ENCODE measurements at regions of chr3 and their contacts with region 1.

Region 1: GRCh38 chr3:39519554-39520288 is 52.2 kb downstream of the MOBP start:
- DNase-seq: no peak
- H3K4me3 ChIP-seq: no peak overlapping the region
- H3K27ac ChIP-seq: no peak overlapping the region
- H3K4me1 ChIP-seq: peaks cover 3% of the 10 kb centered on the region
- H3K27me3 ChIP-seq: no peaks in the 10 kb centered on the region
- CTCF ChIP-seq: no peak
- EP300 ChIP-seq: no peak
- POLR2A ChIP-seq: no peak

Region 2: DNA sequence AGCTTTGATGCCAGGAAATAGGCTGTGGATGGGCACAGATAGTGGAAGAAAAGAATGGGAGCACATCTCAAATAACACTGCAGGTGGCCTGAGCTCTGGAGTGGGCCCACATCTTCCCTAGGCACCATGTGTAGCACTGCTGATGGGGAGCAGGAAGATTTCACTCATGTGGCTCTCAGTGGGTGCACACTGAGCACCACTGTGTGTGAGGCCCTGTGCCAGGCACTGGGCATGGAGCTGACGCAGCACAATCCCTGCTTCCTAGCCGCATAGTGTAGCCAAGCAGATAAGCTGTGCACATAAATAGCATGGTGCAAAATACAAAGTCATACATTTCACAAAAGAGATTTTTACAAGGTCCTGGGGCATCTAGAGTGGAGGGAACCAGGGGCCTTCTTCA is 49.4 kb after region 1 on chr3:
- intact Hi-C with region 1: loop called in 1 of 4 experiments (anchors 1 kb)
- DNase-seq: no peak
- H3K4me3 ChIP-seq: no peak overlapping the region
- H3K27ac ChIP-seq: no peak overlapping the region
- H3K4me1 ChIP-seq: no peaks in the 10 kb centered on the region
- H3K27me3 ChIP-seq: no peaks in the 10 kb centered on the region
- CTCF ChIP-seq: no peak
- EP300 ChIP-seq: no peak
- POLR2A ChIP-seq: no peak